Activated CD8-positive, alpha-beta T cell treated with anti-CD3 and anti-CD28 coated beads for 36 hours (primary cell): ENCODE measurements at regions of chr13 and their contacts with region 1.

Region 1: DNA sequence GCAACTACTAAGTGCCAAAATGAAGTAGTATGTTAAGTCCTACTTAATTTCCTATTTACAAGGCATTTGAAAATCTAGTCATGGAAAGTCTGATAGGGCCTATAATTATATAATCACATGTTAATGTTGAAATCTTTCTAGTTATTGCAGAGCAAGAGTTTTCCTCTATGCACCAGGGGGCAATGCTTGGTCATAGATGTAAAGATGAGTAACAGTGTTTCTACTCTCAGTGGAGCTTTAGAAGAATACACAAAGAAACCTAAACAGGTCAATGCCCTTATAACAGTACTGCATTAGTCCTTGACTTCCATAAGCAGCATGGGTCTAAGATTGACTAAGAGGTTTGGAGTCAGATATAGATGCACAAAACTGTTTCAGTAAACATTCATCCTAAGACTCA is 218.7 kb downstream of the KCTD12 start:
- DNase-seq: peak; percentile 23
- ATAC-seq: peak; percentile 72
- H3K4me3 Mint-ChIP-seq: no peak overlapping the region
- H3K27ac Mint-ChIP-seq: no peak overlapping the region
- H3K4me1 Mint-ChIP-seq: peaks cover 3% of the 10 kb centered on the region
- H3K27me3 Mint-ChIP-seq: no peaks in the 10 kb centered on the region
- CTCF ChIP-seq: no peak

Region 2: DNA sequence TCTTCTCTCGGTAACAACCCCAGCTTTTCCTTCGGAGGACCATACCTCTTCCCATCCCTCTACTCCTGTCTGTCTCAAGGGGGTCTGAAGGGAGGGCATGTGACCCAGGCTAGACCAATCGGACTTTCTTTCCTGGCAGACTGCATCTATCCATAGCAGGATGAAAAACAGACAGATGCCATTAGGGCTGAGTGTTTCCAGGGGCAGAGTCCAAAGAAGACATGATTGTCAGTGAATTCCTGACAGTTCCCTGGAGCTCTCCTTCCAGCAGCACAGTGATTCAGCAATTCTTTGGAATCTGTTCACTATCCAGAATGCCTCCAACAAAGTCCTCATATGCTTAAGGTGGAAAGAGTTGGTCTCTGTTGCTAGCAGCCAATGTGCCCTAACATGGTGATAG is 28.8 kb after region 1 on chr13:
- CTCF ChIA-PET with region 1: no interaction called
- POLR2A ChIA-PET with region 1: no interaction called
- intact Hi-C with region 1: no loop called
- DNase-seq: no peak
- ATAC-seq: no peak
- H3K4me3 Mint-ChIP-seq: no peak overlapping the region
- H3K27ac Mint-ChIP-seq: no peak overlapping the region
- H3K4me1 Mint-ChIP-seq: no peaks in the 10 kb centered on the region
- H3K27me3 Mint-ChIP-seq: peaks cover 9% of the 10 kb centered on the region
- CTCF ChIP-seq: no peak

Region 3: DNA sequence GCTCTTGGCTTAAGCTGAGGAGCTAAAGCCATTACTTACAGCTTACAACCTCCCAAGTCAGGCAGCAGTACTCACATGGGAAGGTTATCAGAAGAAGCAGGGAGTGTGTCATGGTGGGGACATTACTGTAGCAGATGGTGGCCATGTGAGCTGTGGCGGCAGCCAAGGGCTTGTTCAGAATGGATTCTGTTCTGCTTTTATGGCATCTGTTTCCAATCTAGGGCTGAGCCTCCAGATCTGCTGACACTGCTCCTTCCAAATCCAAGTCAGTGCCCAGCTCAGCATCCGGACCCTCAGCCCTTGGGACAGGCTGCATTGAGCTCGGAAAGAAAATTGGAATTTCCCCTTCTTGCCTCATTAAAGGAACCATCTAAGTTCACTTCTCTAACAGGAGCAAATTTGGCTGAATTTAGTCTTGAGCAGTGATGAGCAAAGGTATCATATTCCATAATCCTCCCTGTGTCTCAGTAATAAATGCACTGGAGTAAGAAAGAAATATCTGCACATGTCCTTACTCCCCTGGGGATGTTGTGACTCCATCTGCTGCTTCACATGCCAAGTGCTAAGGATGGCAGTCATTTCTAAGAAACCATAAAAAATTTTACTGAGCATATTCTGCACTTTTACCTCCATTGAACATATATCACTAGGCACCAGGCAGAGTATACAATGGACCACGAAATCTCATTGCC is 144.8 kb after region 1 on chr13:
- CTCF ChIA-PET with region 1: no interaction called
- POLR2A ChIA-PET with region 1: no interaction called
- intact Hi-C with region 1: loop called (anchors 10 kb)
- DNase-seq: no peak
- ATAC-seq: no peak
- H3K4me3 Mint-ChIP-seq: no peak overlapping the region
- H3K27ac Mint-ChIP-seq: no peak overlapping the region
- H3K4me1 Mint-ChIP-seq: peaks cover 5% of the 10 kb centered on the region
- H3K27me3 Mint-ChIP-seq: peaks cover 14% of the 10 kb centered on the region
- CTCF ChIP-seq: no peak